ENCODE measurements at regions of chr19 and their contacts with region 1.

Region 1: DNA sequence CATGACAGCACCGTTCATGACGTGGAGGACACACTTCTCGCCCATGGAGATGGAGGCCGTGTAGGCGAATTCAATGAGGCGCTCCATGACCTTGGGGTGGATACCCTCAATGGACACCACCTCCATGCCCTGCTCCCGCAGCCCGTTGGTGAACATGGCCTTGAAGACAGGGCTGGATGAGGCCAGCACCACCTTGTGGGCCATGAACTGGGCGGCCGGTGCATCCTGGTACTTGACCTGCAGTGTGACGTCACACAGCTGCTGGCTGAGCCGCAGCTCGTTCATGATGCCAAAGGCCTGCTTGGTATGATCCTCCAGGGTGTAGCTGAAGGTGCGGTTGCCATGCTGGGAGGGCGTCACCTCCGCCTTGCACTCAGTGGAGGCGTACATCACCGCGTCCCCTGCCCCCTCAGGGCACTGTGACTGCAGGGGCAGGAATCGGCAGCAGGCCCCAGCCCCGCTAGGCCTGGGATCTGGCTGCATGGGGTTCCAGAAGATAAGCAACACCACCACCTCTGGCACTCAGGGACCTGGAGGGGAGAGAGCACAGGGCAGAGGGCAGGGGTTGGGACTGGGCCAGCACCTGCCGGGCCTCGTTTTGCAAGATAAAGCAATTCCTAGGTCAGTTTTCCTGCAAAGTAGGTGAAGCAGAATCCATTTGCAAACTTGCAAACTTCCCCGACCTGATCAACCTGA is 3.5 kb downstream of the KEAP1 start:
- DNase-seq: no peak
- CTCF ChIP-seq: no peak

Region 2: GRCh38 chr19:10450853-10451609 is 48.7 kb before region 1 on chr19:
- CTCF ChIA-PET with region 1: no interaction called
- POLR2A ChIA-PET with region 1: no interaction called
- DNase-seq: no peak
- CTCF ChIP-seq: no peak

Region 3: DNA sequence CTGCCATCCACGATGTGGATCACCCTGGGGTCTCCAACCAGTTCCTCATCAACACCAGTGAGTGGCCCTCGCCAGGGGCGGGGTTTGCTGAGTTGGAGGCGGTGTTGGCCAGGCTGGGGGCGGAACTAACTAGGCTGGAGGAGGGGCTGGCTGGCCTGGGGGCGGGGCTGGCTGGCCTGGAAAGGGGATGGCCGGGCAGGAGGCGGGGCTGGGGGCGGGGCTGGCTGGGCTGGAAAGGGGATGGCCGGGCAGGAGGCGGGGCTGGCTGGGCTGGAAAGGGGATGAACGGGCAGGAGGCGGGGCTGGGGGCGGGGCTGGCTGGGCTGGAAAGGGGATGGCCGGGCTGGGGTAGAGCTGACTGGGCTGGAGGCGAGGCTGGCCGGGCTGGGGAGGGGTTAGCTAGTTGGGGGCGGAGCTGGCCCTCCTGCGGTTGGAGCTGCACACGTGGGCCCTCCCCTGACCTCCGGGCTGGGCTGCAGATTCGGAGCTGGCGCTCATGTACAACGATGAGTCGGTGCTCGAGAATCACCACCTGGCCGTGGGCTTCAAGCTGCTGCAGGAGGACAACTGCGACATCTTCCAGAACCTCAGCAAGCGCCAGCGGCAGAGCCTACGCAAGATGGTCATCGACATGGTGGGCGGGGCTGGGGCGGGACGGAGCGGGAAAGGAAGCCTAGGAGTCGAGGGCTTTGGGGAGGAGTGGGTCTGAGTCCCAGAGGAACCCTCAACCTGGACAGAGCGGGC is 38.5 kb before region 1 on chr19:
- CTCF ChIA-PET with region 1: no interaction called
- POLR2A ChIA-PET with region 1: interaction called, 12 read pairs
- DNase-seq: peak; percentile 99
- CTCF ChIP-seq: no peak

Region 4: DNA sequence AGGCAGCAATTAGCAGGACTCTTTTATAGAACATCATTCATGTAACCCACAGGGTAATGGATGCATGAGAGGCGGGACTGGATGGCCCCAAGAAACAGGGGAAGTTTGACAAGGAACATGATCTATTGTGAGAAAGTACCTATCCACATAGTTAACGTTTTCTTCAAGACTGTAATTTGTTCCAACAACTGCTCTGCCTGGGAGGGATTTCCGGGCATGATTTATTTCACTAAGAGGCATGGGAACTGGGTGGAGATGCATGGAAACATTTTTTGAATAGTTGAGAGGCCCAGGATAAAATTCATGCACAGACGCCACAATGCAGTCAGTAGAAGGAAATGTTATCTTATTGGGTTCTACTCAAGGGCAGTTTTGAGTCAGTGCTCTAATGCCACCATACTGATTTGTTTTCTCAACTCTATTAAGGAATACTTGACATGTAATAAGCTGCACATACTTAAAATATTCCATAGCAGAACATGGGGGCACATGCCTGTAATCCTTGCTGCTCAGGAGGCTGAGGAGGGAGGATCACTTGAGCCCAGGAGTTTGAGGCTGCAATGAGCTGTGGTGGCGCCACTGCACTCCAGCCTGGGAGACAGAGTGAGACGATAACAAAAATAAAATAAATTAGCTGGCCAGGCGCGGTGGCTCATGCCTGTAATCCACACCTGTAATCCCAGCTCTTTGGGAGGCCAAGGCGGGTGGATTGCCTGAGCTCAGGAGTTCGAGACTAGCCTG is 34.1 kb after region 1 on chr19:
- CTCF ChIA-PET with region 1: no interaction called
- POLR2A ChIA-PET with region 1: no interaction called
- DNase-seq: no peak
- CTCF ChIP-seq: no peak

Region 5: GRCh38 chr19:10587022-10587789 is 87.5 kb after region 1 on chr19 and contains the start of gene AP1M2:
- CTCF ChIA-PET with region 1: no interaction called
- POLR2A ChIA-PET with region 1: no interaction called
- DNase-seq: no peak
- CTCF ChIP-seq: no peak

Region 6: GRCh38 chr19:10600149-10600548 is 100.5 kb after region 1 on chr19:
- CTCF ChIA-PET with region 1: no interaction called
- POLR2A ChIA-PET with region 1: no interaction called
- DNase-seq: no peak
- CTCF ChIP-seq: no peak